CD4-positive, alpha-beta memory T cell (primary cell): ENCODE measurements at regions of chr3 and their contacts with region 1.

Region 1: DNA sequence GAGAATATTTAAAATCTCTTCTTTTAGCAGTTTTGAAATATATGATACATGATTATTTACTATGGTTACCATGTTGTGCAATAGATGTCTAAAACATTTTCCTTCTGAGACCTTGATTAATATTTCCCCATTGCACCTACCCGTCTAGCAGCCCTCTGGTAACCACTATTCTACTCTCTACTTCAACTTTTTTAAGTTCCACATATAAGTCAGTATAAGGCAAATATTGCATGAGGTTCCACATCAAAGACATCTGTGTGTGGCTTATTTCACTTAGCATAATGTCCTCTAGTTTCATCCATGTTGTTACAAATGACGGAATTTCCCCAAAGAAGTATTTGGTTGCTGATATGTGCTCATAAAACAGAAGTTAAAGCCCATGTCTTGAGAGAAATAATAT is 29.6 kb upstream of the NFKBIZ start:
- DNase-seq: no peak
- H3K4me3 ChIP-seq: no peak overlapping the region
- H3K4me3 Mint-ChIP-seq: no peak overlapping the region
- H3K27ac ChIP-seq: no peak overlapping the region
- H3K27ac Mint-ChIP-seq: peak overlapping the region in 2 of 7 donors; percentile 41 to 74
- H3K4me1 ChIP-seq: peaks cover 2% of the 10 kb centered on the region
- H3K4me1 Mint-ChIP-seq: peaks cover 7 to 16% (median 12%) of the 10 kb centered on the region in 4 donors
- H3K27me3 ChIP-seq: no peaks in the 10 kb centered on the region
- H3K27me3 Mint-ChIP-seq: no peaks in the 10 kb centered on the region

Region 2: GRCh38 chr3:101809178-101810021 is 10.4 kb before region 1 on chr3:
- CTCF ChIA-PET with region 1: interaction called, 20 read pairs
- POLR2A ChIA-PET with region 1: interaction called, 3 read pairs
- intact Hi-C with region 1: no loop called
- DNase-seq: peak; percentile 49 to 60 (median 55)
- H3K4me3 ChIP-seq: no peak overlapping the region
- H3K4me3 Mint-ChIP-seq: peak overlapping the region in 6 of 8 donors; percentile 22 to 43 (median 34)
- H3K27ac ChIP-seq: peak overlapping the region; percentile 29
- H3K27ac Mint-ChIP-seq: peak overlapping the region; percentile 43 to 90 (median 83)
- H3K4me1 ChIP-seq: peaks cover 28% of the 10 kb centered on the region
- H3K4me1 Mint-ChIP-seq: peaks cover 25 to 47% (median 30%) of the 10 kb centered on the region in 4 donors
- H3K27me3 ChIP-seq: no peaks in the 10 kb centered on the region
- H3K27me3 Mint-ChIP-seq: no peaks in the 10 kb centered on the region